CD8-positive, alpha-beta T cell (primary cell): ENCODE measurements at regions of chr3 and their contacts with region 1.

Region 1: GRCh38 chr3:153628591-153628990 is 466.6 kb downstream of the RAP2B start:
- DNase-seq: peak in 2 of 9 experiments; percentile 14 to 25
- ATAC-seq: no peak
- H3K4me3 ChIP-seq: no peak overlapping the region
- H3K4me3 Mint-ChIP-seq: peak overlapping the region; percentile 17
- H3K27ac ChIP-seq: no peak overlapping the region
- H3K27ac Mint-ChIP-seq: no peak overlapping the region
- H3K4me1 ChIP-seq: peaks cover 16% of the 10 kb centered on the region
- H3K4me1 Mint-ChIP-seq: peaks cover 33% of the 10 kb centered on the region
- H3K27me3 ChIP-seq: no peaks in the 10 kb centered on the region
- H3K27me3 Mint-ChIP-seq: no peaks in the 10 kb centered on the region
- CTCF ChIP-seq: no peak

Region 2: GRCh38 chr3:153658136-153658535 is 29.5 kb after region 1 on chr3:
- CTCF ChIA-PET with region 1: no interaction called
- POLR2A ChIA-PET with region 1: no interaction called
- intact Hi-C with region 1: no loop called
- DNase-seq: no peak
- ATAC-seq: no peak
- H3K4me3 ChIP-seq: no peak overlapping the region
- H3K4me3 Mint-ChIP-seq: no peak overlapping the region
- H3K27ac ChIP-seq: no peak overlapping the region
- H3K27ac Mint-ChIP-seq: no peak overlapping the region
- H3K4me1 ChIP-seq: no peaks in the 10 kb centered on the region
- H3K4me1 Mint-ChIP-seq: no peaks in the 10 kb centered on the region
- H3K27me3 ChIP-seq: no peaks in the 10 kb centered on the region
- H3K27me3 Mint-ChIP-seq: no peaks in the 10 kb centered on the region
- CTCF ChIP-seq: no peak

Region 3: GRCh38 chr3:153679714-153680113 is 51.1 kb after region 1 on chr3:
- CTCF ChIA-PET with region 1: no interaction called
- POLR2A ChIA-PET with region 1: no interaction called
- intact Hi-C with region 1: loop called in 1 of 2 experiments (anchors 5 kb)
- DNase-seq: no peak
- ATAC-seq: no peak
- H3K4me3 ChIP-seq: no peak overlapping the region
- H3K4me3 Mint-ChIP-seq: no peak overlapping the region
- H3K27ac ChIP-seq: no peak overlapping the region
- H3K27ac Mint-ChIP-seq: no peak overlapping the region
- H3K4me1 ChIP-seq: no peaks in the 10 kb centered on the region
- H3K4me1 Mint-ChIP-seq: peaks cover 11% of the 10 kb centered on the region
- H3K27me3 ChIP-seq: no peaks in the 10 kb centered on the region
- H3K27me3 Mint-ChIP-seq: no peaks in the 10 kb centered on the region
- CTCF ChIP-seq: no peak